Naive thymus-derived CD4-positive, alpha-beta T cell (primary cell): ENCODE measurements at regions of chr2 and their contacts with region 1.

Region 1: GRCh38 chr2:6877402-6878304 is at the start of gene RSAD2:
- DNase-seq: peak in 8 of 9 donors; percentile 29 to 73 (median 64)
- ATAC-seq: peak; percentile 85
- H3K4me3 ChIP-seq: peak within 1 kb of the TSS; percentile 58
- H3K4me3 Mint-ChIP-seq: peak within 1 kb of the TSS; percentile 80 to 97 (median 90)
- H3K27ac ChIP-seq: peak within 1 kb of the TSS; percentile 59
- H3K27ac Mint-ChIP-seq: peak within 1 kb of the TSS; percentile 80 to 98 (median 91)
- H3K4me1 ChIP-seq: peaks cover 20 to 50% of the 10 kb centered on the region in 2 donors
- H3K4me1 Mint-ChIP-seq: peaks cover 36 to 94% (median 78%) of the 10 kb centered on the region in 7 donors
- H3K27me3 ChIP-seq: no peaks in the 10 kb centered on the region
- H3K27me3 Mint-ChIP-seq: no peaks in the 10 kb centered on the region
- total RNA-seq, gene RSAD2: 5.0 to 72.6 (median 5.6) TPM

Region 2: GRCh38 chr2:6832596-6833299 is 44.9 kb before region 1 on chr2:
- CTCF ChIA-PET with region 1: no interaction called
- POLR2A ChIA-PET with region 1: no interaction called
- intact Hi-C with region 1: loop called in 1 of 2 experiments (anchors 1 kb)
- DNase-seq: no peak
- ATAC-seq: no peak
- H3K4me3 ChIP-seq: no peak overlapping the region
- H3K4me3 Mint-ChIP-seq: peak overlapping the region in 1 of 10 donors; percentile 72
- H3K27ac ChIP-seq: no peak overlapping the region
- H3K27ac Mint-ChIP-seq: peak overlapping the region in 6 of 9 donors; percentile 0 to 92 (median 36)
- H3K4me1 ChIP-seq: no peaks in the 10 kb centered on the region
- H3K4me1 Mint-ChIP-seq: peaks cover 0 to 31% (median 7%) of the 10 kb centered on the region in 7 donors
- H3K27me3 ChIP-seq: no peaks in the 10 kb centered on the region
- H3K27me3 Mint-ChIP-seq: no peaks in the 10 kb centered on the region

Region 3: DNA sequence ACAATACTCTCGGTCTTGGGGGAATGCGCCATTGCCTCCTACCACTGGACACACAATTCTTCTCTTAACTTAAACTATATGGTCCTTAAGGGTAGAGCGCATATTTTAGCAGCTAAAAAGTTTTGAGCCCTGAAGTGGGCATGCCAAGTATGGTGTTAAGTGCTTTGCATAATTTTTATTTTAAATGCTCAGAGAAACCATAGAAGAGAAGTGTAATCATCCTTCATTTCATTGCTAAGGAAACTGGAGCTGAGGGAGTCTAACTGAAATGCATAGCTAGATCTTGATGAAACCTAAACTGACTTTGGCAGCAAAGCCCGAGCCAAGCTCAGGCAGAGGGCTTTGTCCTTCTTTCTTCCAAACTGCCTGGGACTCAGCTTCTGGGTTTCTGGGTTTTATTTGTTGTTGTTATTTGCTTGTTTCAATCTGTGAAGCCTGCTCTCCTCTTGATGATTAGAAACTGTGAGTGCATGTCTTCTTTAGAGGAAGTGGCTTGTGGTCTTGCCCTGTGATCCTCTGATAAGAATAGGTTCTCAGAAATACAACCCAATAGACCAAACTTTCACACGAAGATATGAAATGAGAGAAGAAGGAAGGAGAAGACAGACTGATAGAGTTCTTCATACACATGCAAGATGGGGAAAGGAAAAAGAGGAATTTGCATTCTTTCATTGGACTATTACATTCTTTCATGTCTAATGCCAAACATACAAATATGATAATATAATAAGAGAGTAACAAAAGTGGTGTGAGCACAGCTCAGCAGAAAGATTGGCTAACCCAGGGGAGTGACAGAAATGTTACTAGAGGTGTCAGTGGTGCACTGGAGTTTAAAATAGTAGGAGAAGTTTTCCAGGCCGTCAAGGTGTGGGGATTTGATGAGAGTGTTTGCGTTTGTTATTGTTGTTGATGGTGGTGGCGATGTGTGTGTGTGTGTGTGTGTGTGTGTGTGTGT is 32.1 kb after region 1 on chr2:
- CTCF ChIA-PET with region 1: interaction called, 4 read pairs
- POLR2A ChIA-PET with region 1: interaction called, 70 read pairs
- intact Hi-C with region 1: loop called (anchors 1 kb)
- DNase-seq: peak in 7 of 9 donors; percentile 70 to 84 (median 80)
- ATAC-seq: peak; percentile 84
- H3K4me3 ChIP-seq: peak overlapping the region; percentile 17
- H3K4me3 Mint-ChIP-seq: peak overlapping the region; percentile 68 to 85 (median 80)
- H3K27ac ChIP-seq: peak overlapping the region; percentile 85
- H3K27ac Mint-ChIP-seq: peak overlapping the region; percentile 85 to 99 (median 92)
- H3K4me1 ChIP-seq: peaks cover 58 to 94% of the 10 kb centered on the region in 2 donors
- H3K4me1 Mint-ChIP-seq: peaks cover 61 to 97% (median 93%) of the 10 kb centered on the region in 7 donors
- H3K27me3 ChIP-seq: no peaks in the 10 kb centered on the region
- H3K27me3 Mint-ChIP-seq: peaks cover 0 to 12% (median 0%) of the 10 kb centered on the region in 5 donors

Region 4: GRCh38 chr2:7497178-7497577 is 619.5 kb after region 1 on chr2:
- CTCF ChIA-PET with region 1: no interaction called
- POLR2A ChIA-PET with region 1: no interaction called
- intact Hi-C with region 1: no loop called
- DNase-seq: peak in 1 of 9 donors; percentile 27
- ATAC-seq: peak; percentile 52
- H3K4me3 ChIP-seq: no peak overlapping the region
- H3K4me3 Mint-ChIP-seq: no peak overlapping the region
- H3K27ac ChIP-seq: no peak overlapping the region
- H3K27ac Mint-ChIP-seq: peak overlapping the region in 2 of 9 donors; percentile 5 to 26
- H3K4me1 ChIP-seq: no peaks in the 10 kb centered on the region
- H3K4me1 Mint-ChIP-seq: peaks cover 10 to 42% (median 29%) of the 10 kb centered on the region in 7 donors
- H3K27me3 ChIP-seq: no peaks in the 10 kb centered on the region
- H3K27me3 Mint-ChIP-seq: no peaks in the 10 kb centered on the region

Region 5: DNA sequence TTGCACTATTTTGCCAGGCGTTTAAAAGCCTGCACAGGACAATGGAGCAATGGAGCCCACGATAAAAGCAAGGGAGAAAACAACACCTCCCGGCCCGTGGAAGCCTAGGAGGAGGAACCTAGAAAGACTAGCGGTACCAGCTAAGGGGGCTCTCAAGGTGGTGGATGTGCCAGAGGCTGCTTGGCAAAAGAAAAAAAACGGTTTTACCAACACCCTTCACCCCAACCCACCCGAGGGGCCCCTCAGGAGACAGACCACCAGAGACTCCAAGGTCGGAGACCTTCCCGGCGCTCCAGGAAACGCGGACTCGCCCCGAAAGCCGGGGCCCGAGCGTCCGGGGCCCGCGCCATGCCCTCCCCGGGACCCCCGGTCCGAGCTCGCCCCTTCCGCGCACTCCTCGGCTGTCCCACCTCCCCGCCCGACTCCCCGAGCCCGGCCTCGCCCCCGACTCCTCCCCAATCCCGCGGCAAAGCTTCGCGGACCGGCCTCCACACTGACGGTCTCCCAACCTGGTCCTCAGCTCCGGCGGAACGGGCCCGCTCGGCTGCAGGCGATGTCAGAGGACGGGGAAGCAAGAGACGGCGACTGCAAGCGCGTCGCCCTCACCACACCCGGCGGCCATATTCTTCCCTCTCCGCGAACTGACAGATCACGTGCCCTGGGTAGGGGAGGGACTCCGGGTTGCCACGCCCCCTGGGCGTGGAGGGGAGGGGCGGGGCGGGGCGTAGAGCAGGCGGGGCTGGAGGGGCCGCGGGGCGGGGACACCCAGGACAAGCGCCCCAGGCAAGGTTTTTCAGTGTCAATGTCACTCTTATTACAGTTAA is 1959.5 kb after region 1 on chr2 and contains the start of gene KIDINS220:
- CTCF ChIA-PET with region 1: no interaction called
- POLR2A ChIA-PET with region 1: no interaction called
- intact Hi-C with region 1: loop called in 1 of 2 experiments (anchors 5 kb)
- DNase-seq: peak; percentile 71 to 87 (median 82)
- ATAC-seq: peak; percentile 99
- H3K4me3 ChIP-seq: peak within 1 kb of the TSS; percentile 69
- H3K4me3 Mint-ChIP-seq: peak within 1 kb of the TSS; percentile 96 to 100 (median 99)
- H3K27ac ChIP-seq: peak within 1 kb of the TSS; percentile 78
- H3K27ac Mint-ChIP-seq: peak within 1 kb of the TSS; percentile 94 to 100 (median 98)
- H3K4me1 ChIP-seq: peaks cover 23 to 29% of the 10 kb centered on the region in 2 donors
- H3K4me1 Mint-ChIP-seq: peaks cover 26 to 60% (median 51%) of the 10 kb centered on the region in 7 donors
- H3K27me3 ChIP-seq: no peaks in the 10 kb centered on the region
- H3K27me3 Mint-ChIP-seq: peaks cover 0 to 5% (median 0%) of the 10 kb centered on the region in 5 donors
- total RNA-seq, gene KIDINS220: 34.5 to 54.3 (median 48.3) TPM